Esophagus muscularis mucosa (tissue), 4 donors: ENCODE measurements at regions of chr1 and their contacts with region 1.

Region 1: GRCh38 chr1:171226747-171227370 is 21.4 kb upstream of the FMO1 start:
- DNase-seq: no peak
- H3K4me3 ChIP-seq: no peak overlapping the region
- H3K27ac ChIP-seq: no peak overlapping the region
- H3K4me1 ChIP-seq: peaks cover 1 to 27% (median 23%) of the 10 kb centered on the region in 4 donors
- H3K27me3 ChIP-seq: no peaks in the 10 kb centered on the region
- CTCF ChIP-seq: peak; percentile 72 to 78 (median 74)
- EP300 ChIP-seq: no peak
- POLR2A ChIP-seq: no peak

Region 2: GRCh38 chr1:170881268-170882265 is 345.3 kb before region 1 on chr1:
- intact Hi-C with region 1: no loop called
- DNase-seq: no peak
- H3K4me3 ChIP-seq: peak overlapping the region in 1 of 4 donors; percentile 0
- H3K27ac ChIP-seq: no peak overlapping the region
- H3K4me1 ChIP-seq: peaks cover 0 to 12% (median 7%) of the 10 kb centered on the region in 4 donors
- H3K27me3 ChIP-seq: no peaks in the 10 kb centered on the region
- CTCF ChIP-seq: peak; percentile 41 to 48 (median 42)
- EP300 ChIP-seq: no peak
- POLR2A ChIP-seq: no peak

Region 3: GRCh38 chr1:170967042-170967910 is 259.6 kb before region 1 on chr1:
- intact Hi-C with region 1: loop called (anchors 5 kb)
- DNase-seq: no peak
- H3K4me3 ChIP-seq: no peak overlapping the region
- H3K27ac ChIP-seq: no peak overlapping the region
- H3K4me1 ChIP-seq: no peaks in the 10 kb centered on the region
- H3K27me3 ChIP-seq: no peaks in the 10 kb centered on the region
- CTCF ChIP-seq: peak; percentile 67 to 76 (median 69)
- EP300 ChIP-seq: no peak
- POLR2A ChIP-seq: no peak

Region 4: GRCh38 chr1:171081314-171081753 is 145.5 kb before region 1 on chr1:
- intact Hi-C with region 1: loop called (anchors 2 kb)
- DNase-seq: no peak
- H3K4me3 ChIP-seq: no peak overlapping the region
- H3K27ac ChIP-seq: peak overlapping the region; percentile 40 to 63 (median 46)
- H3K4me1 ChIP-seq: peaks cover 9 to 14% (median 11%) of the 10 kb centered on the region in 4 donors
- H3K27me3 ChIP-seq: no peaks in the 10 kb centered on the region
- CTCF ChIP-seq: peak; percentile 38 to 55 (median 54)
- EP300 ChIP-seq: no peak
- POLR2A ChIP-seq: no peak

Region 5: GRCh38 chr1:171530676-171531075 is 303.8 kb after region 1 on chr1:
- intact Hi-C with region 1: no loop called
- DNase-seq: no peak
- H3K4me3 ChIP-seq: no peak overlapping the region
- H3K27ac ChIP-seq: no peak overlapping the region
- H3K4me1 ChIP-seq: no peaks in the 10 kb centered on the region
- H3K27me3 ChIP-seq: no peaks in the 10 kb centered on the region
- CTCF ChIP-seq: no peak
- EP300 ChIP-seq: no peak
- POLR2A ChIP-seq: no peak